CD4-positive, alpha-beta memory T cell (primary cell): ENCODE measurements at regions of chrX and their contacts with region 1.

Region 1: GRCh38 chrX:74343343-74344279 is 39.6 kb downstream of the ZCCHC13 start:
- DNase-seq: peak; percentile 43 to 57 (median 47)
- H3K4me3 ChIP-seq: no peak overlapping the region
- H3K4me3 Mint-ChIP-seq: no peak overlapping the region
- H3K27ac ChIP-seq: no peak overlapping the region
- H3K27ac Mint-ChIP-seq: no peak overlapping the region
- H3K4me1 ChIP-seq: no peaks in the 10 kb centered on the region
- H3K4me1 Mint-ChIP-seq: no peaks in the 10 kb centered on the region
- H3K27me3 ChIP-seq: no peaks in the 10 kb centered on the region
- H3K27me3 Mint-ChIP-seq: peaks cover 0 to 3% of the 10 kb centered on the region in 2 donors

Region 2: DNA sequence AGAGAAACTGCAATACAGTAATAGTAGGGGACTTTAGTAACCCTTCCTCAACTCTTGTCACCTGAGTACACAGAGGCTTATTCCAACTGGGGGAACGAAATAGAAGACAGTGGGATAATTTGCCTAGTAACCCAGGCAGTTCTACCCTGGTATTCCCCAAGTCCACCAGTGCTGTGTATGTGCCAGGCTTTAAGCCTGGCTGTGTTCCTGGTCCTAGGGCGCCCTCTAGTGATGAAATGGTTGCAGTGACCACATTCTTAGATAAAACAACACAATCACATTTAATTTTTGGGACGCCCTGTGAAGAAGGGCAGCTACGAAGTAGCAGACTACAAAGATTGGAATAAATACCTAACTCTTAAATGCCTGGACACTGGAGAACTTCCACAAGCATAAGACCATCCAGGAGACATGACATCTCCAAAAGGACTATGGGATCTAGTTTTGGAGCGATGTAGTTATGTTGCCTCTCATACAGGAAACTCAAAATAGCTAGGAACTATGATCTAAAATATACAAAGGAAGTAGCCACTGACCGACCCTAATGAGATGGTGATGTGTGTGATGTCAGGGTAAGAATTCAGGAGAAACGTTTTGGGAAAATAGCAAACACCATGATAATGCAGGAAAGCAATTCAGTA is 328.1 kb before region 1 on chrX:
- CTCF ChIA-PET with region 1: interaction called, 4 read pairs
- POLR2A ChIA-PET with region 1: no interaction called
- intact Hi-C with region 1: loop called (anchors 2 kb)
- DNase-seq: peak; percentile 47 to 72 (median 71)
- H3K4me3 ChIP-seq: no peak overlapping the region
- H3K4me3 Mint-ChIP-seq: no peak overlapping the region
- H3K27ac ChIP-seq: no peak overlapping the region
- H3K27ac Mint-ChIP-seq: peak overlapping the region in 2 of 7 donors; percentile 33 to 39
- H3K4me1 ChIP-seq: no peaks in the 10 kb centered on the region
- H3K4me1 Mint-ChIP-seq: peaks cover 7 to 14% (median 9%) of the 10 kb centered on the region in 4 donors
- H3K27me3 ChIP-seq: no peaks in the 10 kb centered on the region
- H3K27me3 Mint-ChIP-seq: peaks cover 0 to 1% of the 10 kb centered on the region in 2 donors

Region 3: GRCh38 chrX:74465424-74465823 is 121.8 kb after region 1 on chrX:
- CTCF ChIA-PET with region 1: no interaction called
- POLR2A ChIA-PET with region 1: no interaction called
- intact Hi-C with region 1: no loop called
- DNase-seq: no peak
- H3K4me3 ChIP-seq: no peak overlapping the region
- H3K4me3 Mint-ChIP-seq: no peak overlapping the region
- H3K27ac ChIP-seq: no peak overlapping the region
- H3K27ac Mint-ChIP-seq: no peak overlapping the region
- H3K4me1 ChIP-seq: no peaks in the 10 kb centered on the region
- H3K4me1 Mint-ChIP-seq: no peaks in the 10 kb centered on the region
- H3K27me3 ChIP-seq: no peaks in the 10 kb centered on the region
- H3K27me3 Mint-ChIP-seq: peaks cover 0 to 4% of the 10 kb centered on the region in 2 donors